ENCODE measurements at regions of chr4 and their contacts with region 1.

Region 1: GRCh38 chr4:163554870-163555465 is 60.5 kb downstream of the TMA16 start:
- DNase-seq: no peak
- H3K4me3 ChIP-seq: no peak overlapping the region
- H3K27ac ChIP-seq: peak overlapping the region in 4 of 8 donors; percentile 84 to 89 (median 87)
- H3K4me1 ChIP-seq: peaks cover 30 to 97% (median 66%) of the 10 kb centered on the region in 6 donors
- H3K27me3 ChIP-seq: no peaks in the 10 kb centered on the region
- CTCF ChIP-seq: peak; percentile 27 to 80 (median 60)
- POLR2A ChIP-seq: no peak

Region 2: GRCh38 chr4:163681208-163681821 is 126.3 kb after region 1 on chr4:
- intact Hi-C with region 1: loop called (anchors 2 kb)
- DNase-seq: no peak
- H3K4me3 ChIP-seq: no peak overlapping the region
- H3K27ac ChIP-seq: no peak overlapping the region
- H3K4me1 ChIP-seq: peaks cover 0 to 11% (median 0%) of the 10 kb centered on the region in 6 donors
- H3K27me3 ChIP-seq: no peaks in the 10 kb centered on the region
- CTCF ChIP-seq: peak; percentile 51 to 83 (median 70)
- POLR2A ChIP-seq: no peak

Region 3: GRCh38 chr4:163755013-163755412 is 200.0 kb after region 1 on chr4:
- intact Hi-C with region 1: loop called (anchors 5 kb)
- DNase-seq: no peak
- H3K4me3 ChIP-seq: no peak overlapping the region
- H3K27ac ChIP-seq: no peak overlapping the region
- H3K4me1 ChIP-seq: peaks cover 0 to 5% (median 0%) of the 10 kb centered on the region in 6 donors
- H3K27me3 ChIP-seq: no peaks in the 10 kb centered on the region
- CTCF ChIP-seq: peak in 10 of 11 experiments; percentile 15 to 55 (median 29)
- POLR2A ChIP-seq: no peak

Region 4: DNA sequence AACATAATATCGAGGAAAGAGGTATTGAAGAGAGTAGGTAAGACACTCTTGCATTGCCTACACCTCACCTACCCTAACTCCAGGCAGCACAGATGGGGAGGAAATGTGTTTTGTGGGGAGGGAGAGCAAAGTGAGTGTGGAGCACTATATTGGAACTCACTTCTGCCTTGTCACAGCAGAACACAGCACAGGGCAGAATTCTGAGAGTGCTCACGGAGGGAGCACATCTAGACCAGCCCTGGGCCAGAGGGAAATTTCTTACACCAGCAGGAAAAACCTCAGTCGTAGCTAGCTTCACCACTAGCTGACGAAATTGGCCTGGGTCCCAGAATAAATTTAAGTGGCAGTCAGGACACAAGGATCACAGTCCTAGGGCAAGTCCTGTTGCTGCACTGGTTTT is 456.8 kb after region 1 on chr4:
- intact Hi-C with region 1: no loop called
- DNase-seq: no peak
- H3K4me3 ChIP-seq: no peak overlapping the region
- H3K27ac ChIP-seq: no peak overlapping the region
- H3K4me1 ChIP-seq: no peaks in the 10 kb centered on the region
- H3K27me3 ChIP-seq: no peaks in the 10 kb centered on the region
- CTCF ChIP-seq: no peak
- POLR2A ChIP-seq: no peak

Region 5: GRCh38 chr4:164731827-164732474 is 1177.0 kb after region 1 on chr4:
- intact Hi-C with region 1: loop called (anchors 5 kb)
- DNase-seq: no peak
- H3K4me3 ChIP-seq: no peak overlapping the region
- H3K27ac ChIP-seq: no peak overlapping the region
- H3K4me1 ChIP-seq: no peaks in the 10 kb centered on the region
- H3K27me3 ChIP-seq: peaks cover 0 to 7% (median 0%) of the 10 kb centered on the region in 7 donors
- CTCF ChIP-seq: peak; percentile 25 to 77 (median 58)
- POLR2A ChIP-seq: no peak